Naive thymus-derived CD4-positive, alpha-beta T cell (primary cell): ENCODE measurements at regions of chr7 and their contacts with region 1.

Region 1: GRCh38 chr7:7968543-7969305 is at the start of gene GLCCI1:
- DNase-seq: peak; percentile 90 to 98 (median 97)
- ATAC-seq: peak; percentile 95
- H3K4me3 ChIP-seq: peak within 1 kb of the TSS; percentile 75
- H3K4me3 Mint-ChIP-seq: peak within 1 kb of the TSS in 9 of 10 donors; percentile 88 to 99 (median 94)
- H3K27ac ChIP-seq: peak within 1 kb of the TSS; percentile 88
- H3K27ac Mint-ChIP-seq: peak within 1 kb of the TSS; percentile 78 to 98 (median 91)
- H3K4me1 ChIP-seq: peaks cover 16 to 42% of the 10 kb centered on the region in 2 donors
- H3K4me1 Mint-ChIP-seq: peaks cover 5 to 39% (median 29%) of the 10 kb centered on the region in 7 donors
- H3K27me3 ChIP-seq: no peaks in the 10 kb centered on the region
- H3K27me3 Mint-ChIP-seq: no peaks in the 10 kb centered on the region
- total RNA-seq, gene GLCCI1: 24.9 to 43.1 (median 35.4) TPM

Region 2: GRCh38 chr7:7257899-7258692 is 710.6 kb before region 1 on chr7:
- CTCF ChIA-PET with region 1: no interaction called
- POLR2A ChIA-PET with region 1: interaction called, 3 read pairs
- intact Hi-C with region 1: loop called (anchors 5 kb)
- DNase-seq: no peak
- ATAC-seq: peak; percentile 60
- H3K4me3 ChIP-seq: no peak overlapping the region
- H3K4me3 Mint-ChIP-seq: peak overlapping the region; percentile 46 to 78 (median 71)
- H3K27ac ChIP-seq: peak overlapping the region; percentile 62
- H3K27ac Mint-ChIP-seq: peak overlapping the region; percentile 70 to 92 (median 86)
- H3K4me1 ChIP-seq: peaks cover 14 to 19% of the 10 kb centered on the region in 2 donors
- H3K4me1 Mint-ChIP-seq: peaks cover 10 to 64% (median 49%) of the 10 kb centered on the region in 7 donors
- H3K27me3 ChIP-seq: no peaks in the 10 kb centered on the region
- H3K27me3 Mint-ChIP-seq: no peaks in the 10 kb centered on the region

Region 3: GRCh38 chr7:7681179-7681935 is 287.4 kb before region 1 on chr7:
- CTCF ChIA-PET with region 1: interaction called, 3 read pairs
- POLR2A ChIA-PET with region 1: interaction called, 4 read pairs
- intact Hi-C with region 1: loop called (anchors 1 to 2 kb)
- DNase-seq: peak in 7 of 9 donors; percentile 37 to 66 (median 58)
- ATAC-seq: peak; percentile 84
- H3K4me3 ChIP-seq: no peak overlapping the region
- H3K4me3 Mint-ChIP-seq: peak overlapping the region in 5 of 10 donors; percentile 8 to 56 (median 25)
- H3K27ac ChIP-seq: no peak overlapping the region
- H3K27ac Mint-ChIP-seq: peak overlapping the region; percentile 1 to 76 (median 18)
- H3K4me1 ChIP-seq: peaks cover 0 to 15% of the 10 kb centered on the region in 2 donors
- H3K4me1 Mint-ChIP-seq: peaks cover 11 to 48% (median 37%) of the 10 kb centered on the region in 7 donors
- H3K27me3 ChIP-seq: no peaks in the 10 kb centered on the region
- H3K27me3 Mint-ChIP-seq: no peaks in the 10 kb centered on the region

Region 4: GRCh38 chr7:7944619-7945282 is 24.0 kb before region 1 on chr7:
- CTCF ChIA-PET with region 1: no interaction called
- POLR2A ChIA-PET with region 1: interaction called, 5 read pairs
- intact Hi-C with region 1: loop called (anchors 1 to 2 kb)
- DNase-seq: peak in 7 of 9 donors; percentile 23 to 39 (median 33)
- ATAC-seq: peak; percentile 90
- H3K4me3 ChIP-seq: peak overlapping the region; percentile 32
- H3K4me3 Mint-ChIP-seq: peak overlapping the region; percentile 52 to 82 (median 72)
- H3K27ac ChIP-seq: peak overlapping the region; percentile 16
- H3K27ac Mint-ChIP-seq: peak overlapping the region; percentile 43 to 86 (median 80)
- H3K4me1 ChIP-seq: peaks cover 11 to 33% of the 10 kb centered on the region in 2 donors
- H3K4me1 Mint-ChIP-seq: peaks cover 14 to 25% (median 20%) of the 10 kb centered on the region in 7 donors
- H3K27me3 ChIP-seq: no peaks in the 10 kb centered on the region
- H3K27me3 Mint-ChIP-seq: no peaks in the 10 kb centered on the region

Region 5: DNA sequence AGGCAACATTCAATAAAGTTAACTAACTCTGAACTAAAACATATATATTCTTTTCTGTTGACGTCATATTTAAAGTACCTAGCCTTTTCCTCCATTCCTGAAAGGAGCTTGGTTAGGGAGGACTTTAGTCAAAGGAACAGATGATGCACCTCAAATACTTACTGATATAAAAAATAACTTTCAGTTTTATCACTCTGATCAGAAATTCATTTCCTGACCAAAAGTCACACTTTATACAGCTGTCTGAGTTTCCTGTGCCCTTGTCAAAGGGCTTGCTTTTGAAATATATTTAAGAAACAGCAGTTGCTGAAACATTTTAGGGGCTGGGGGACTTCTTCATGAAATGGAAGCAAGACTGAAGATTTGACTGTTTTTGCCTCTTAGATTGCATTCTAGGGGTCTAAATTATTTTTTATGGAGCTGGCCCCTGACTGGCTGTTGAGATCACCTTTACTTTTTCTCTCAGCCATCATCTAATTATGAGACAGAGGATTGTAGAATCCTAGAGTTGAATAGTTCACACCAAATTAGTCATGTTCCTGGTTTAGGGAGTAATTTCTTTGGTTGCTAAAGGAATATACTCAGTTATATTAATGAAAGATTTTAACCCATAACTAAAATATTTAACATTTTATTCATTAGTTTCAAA is 46.5 kb after region 1 on chr7:
- CTCF ChIA-PET with region 1: no interaction called
- POLR2A ChIA-PET with region 1: interaction called, 15 read pairs
- intact Hi-C with region 1: no loop called
- DNase-seq: peak in 7 of 9 donors; percentile 10 to 42 (median 20)
- ATAC-seq: peak; percentile 72
- H3K4me3 ChIP-seq: no peak overlapping the region
- H3K4me3 Mint-ChIP-seq: peak overlapping the region in 9 of 10 donors; percentile 28 to 79 (median 68)
- H3K27ac ChIP-seq: peak overlapping the region; percentile 34
- H3K27ac Mint-ChIP-seq: peak overlapping the region; percentile 29 to 91 (median 85)
- H3K4me1 ChIP-seq: peaks cover 26 to 42% of the 10 kb centered on the region in 2 donors
- H3K4me1 Mint-ChIP-seq: peaks cover 4 to 51% (median 32%) of the 10 kb centered on the region in 7 donors
- H3K27me3 ChIP-seq: no peaks in the 10 kb centered on the region
- H3K27me3 Mint-ChIP-seq: no peaks in the 10 kb centered on the region

Region 6: GRCh38 chr7:8125680-8126444 is 157.1 kb after region 1 on chr7:
- CTCF ChIA-PET with region 1: interaction called, 3 read pairs
- POLR2A ChIA-PET with region 1: interaction called, 43 read pairs
- intact Hi-C with region 1: loop called in 1 of 2 experiments (anchors 1 kb)
- DNase-seq: peak; percentile 47 to 83 (median 77)
- ATAC-seq: peak; percentile 95
- H3K4me3 ChIP-seq: peak overlapping the region; percentile 9
- H3K4me3 Mint-ChIP-seq: peak overlapping the region; percentile 59 to 83 (median 75)
- H3K27ac ChIP-seq: peak overlapping the region; percentile 70
- H3K27ac Mint-ChIP-seq: peak overlapping the region; percentile 92 to 100 (median 99)
- H3K4me1 ChIP-seq: peaks cover 56 to 69% of the 10 kb centered on the region in 2 donors
- H3K4me1 Mint-ChIP-seq: peaks cover 56 to 88% (median 77%) of the 10 kb centered on the region in 7 donors
- H3K27me3 ChIP-seq: no peaks in the 10 kb centered on the region
- H3K27me3 Mint-ChIP-seq: no peaks in the 10 kb centered on the region

Region 7: GRCh38 chr7:8161364-8161828 is 192.7 kb after region 1 on chr7:
- CTCF ChIA-PET with region 1: no interaction called
- POLR2A ChIA-PET with region 1: no interaction called
- intact Hi-C with region 1: no loop called
- DNase-seq: no peak
- ATAC-seq: peak; percentile 42
- H3K4me3 ChIP-seq: no peak overlapping the region
- H3K4me3 Mint-ChIP-seq: no peak overlapping the region
- H3K27ac ChIP-seq: no peak overlapping the region
- H3K27ac Mint-ChIP-seq: no peak overlapping the region
- H3K4me1 ChIP-seq: no peaks in the 10 kb centered on the region
- H3K4me1 Mint-ChIP-seq: peaks cover 0 to 16% (median 4%) of the 10 kb centered on the region in 7 donors
- H3K27me3 ChIP-seq: no peaks in the 10 kb centered on the region
- H3K27me3 Mint-ChIP-seq: no peaks in the 10 kb centered on the region

Region 8: GRCh38 chr7:8190119-8190895 is 221.6 kb after region 1 on chr7:
- CTCF ChIA-PET with region 1: interaction called, 8 read pairs
- POLR2A ChIA-PET with region 1: interaction called, 40 read pairs
- intact Hi-C with region 1: loop called (anchors 1 kb)
- DNase-seq: peak; percentile 11 to 73 (median 65)
- ATAC-seq: peak; percentile 89
- H3K4me3 ChIP-seq: no peak overlapping the region
- H3K4me3 Mint-ChIP-seq: no peak overlapping the region
- H3K27ac ChIP-seq: no peak overlapping the region
- H3K27ac Mint-ChIP-seq: peak overlapping the region in 2 of 9 donors; percentile 5 to 42
- H3K4me1 ChIP-seq: peaks cover 0 to 6% of the 10 kb centered on the region in 2 donors
- H3K4me1 Mint-ChIP-seq: peaks cover 7 to 33% (median 17%) of the 10 kb centered on the region in 7 donors
- H3K27me3 ChIP-seq: no peaks in the 10 kb centered on the region
- H3K27me3 Mint-ChIP-seq: peaks cover 0 to 10% (median 8%) of the 10 kb centered on the region in 5 donors